PC-3 (cell line): ENCODE measurements at regions of chr5 and their contacts with region 1.

Region 1: GRCh38 chr5:102596113-102596512 is 97.3 kb upstream of the SLCO6A1 start:
- DNase-seq: no peak
- ATAC-seq: no peak
- H3K4me3 ChIP-seq: no peak overlapping the region
- H3K27ac ChIP-seq: no peak overlapping the region
- H3K4me1 ChIP-seq: peaks cover 23% of the 10 kb centered on the region
- H3K27me3 ChIP-seq: no peaks in the 10 kb centered on the region
- CTCF ChIP-seq: no peak

Region 2: GRCh38 chr5:102617191-102618187 is 21.4 kb after region 1 on chr5:
- CTCF ChIA-PET with region 1: no interaction called
- POLR2A ChIA-PET with region 1: no interaction called
- intact Hi-C with region 1: loop called (anchors 1 kb)
- DNase-seq: peak; percentile 43
- ATAC-seq: peak; percentile 86
- H3K4me3 ChIP-seq: no peak overlapping the region
- H3K27ac ChIP-seq: no peak overlapping the region
- H3K4me1 ChIP-seq: no peaks in the 10 kb centered on the region
- H3K27me3 ChIP-seq: no peaks in the 10 kb centered on the region
- CTCF ChIP-seq: no peak

Region 3: DNA sequence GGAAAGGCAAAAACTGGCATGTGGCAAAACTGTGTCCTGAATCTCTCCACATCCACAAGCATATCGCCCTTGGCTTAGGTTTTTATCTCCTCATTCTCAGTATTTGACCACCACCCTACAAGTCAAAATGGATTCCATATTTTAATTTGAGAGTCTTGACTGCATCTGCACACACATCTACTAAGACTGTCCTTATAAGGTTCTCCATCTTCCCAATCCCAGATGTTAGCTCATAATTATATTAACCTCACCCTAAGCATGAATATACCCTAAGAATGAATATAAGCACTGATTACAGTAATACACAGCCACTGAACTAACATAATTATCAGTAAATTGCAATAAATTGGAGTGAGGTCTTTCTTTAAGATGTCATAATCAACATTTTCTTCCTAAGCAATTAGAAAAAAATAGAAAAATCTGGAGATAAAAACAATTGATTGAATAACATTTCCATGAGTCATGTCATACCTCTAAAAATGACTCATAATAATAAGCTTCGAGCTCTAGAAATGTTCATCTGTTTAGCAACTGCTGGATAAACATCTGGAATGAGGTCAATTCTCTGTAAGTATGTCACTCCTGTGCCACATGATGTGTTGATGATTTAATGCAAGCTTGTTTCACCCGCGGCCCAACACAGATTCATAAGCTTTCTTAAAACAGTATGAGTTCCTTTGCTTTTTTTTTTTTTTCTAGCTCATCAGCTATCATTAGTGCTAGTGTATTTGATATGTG is 119.1 kb after region 1 on chr5:
- CTCF ChIA-PET with region 1: no interaction called
- POLR2A ChIA-PET with region 1: no interaction called
- intact Hi-C with region 1: loop called (anchors 5 kb)
- DNase-seq: peak; percentile 84
- ATAC-seq: peak; percentile 42
- H3K4me3 ChIP-seq: no peak overlapping the region
- H3K27ac ChIP-seq: no peak overlapping the region
- H3K4me1 ChIP-seq: peaks cover 39% of the 10 kb centered on the region
- H3K27me3 ChIP-seq: no peaks in the 10 kb centered on the region
- CTCF ChIP-seq: no peak